T-cell (primary cell): ENCODE measurements at regions of chr22 and their contacts with region 1.

Region 1: DNA sequence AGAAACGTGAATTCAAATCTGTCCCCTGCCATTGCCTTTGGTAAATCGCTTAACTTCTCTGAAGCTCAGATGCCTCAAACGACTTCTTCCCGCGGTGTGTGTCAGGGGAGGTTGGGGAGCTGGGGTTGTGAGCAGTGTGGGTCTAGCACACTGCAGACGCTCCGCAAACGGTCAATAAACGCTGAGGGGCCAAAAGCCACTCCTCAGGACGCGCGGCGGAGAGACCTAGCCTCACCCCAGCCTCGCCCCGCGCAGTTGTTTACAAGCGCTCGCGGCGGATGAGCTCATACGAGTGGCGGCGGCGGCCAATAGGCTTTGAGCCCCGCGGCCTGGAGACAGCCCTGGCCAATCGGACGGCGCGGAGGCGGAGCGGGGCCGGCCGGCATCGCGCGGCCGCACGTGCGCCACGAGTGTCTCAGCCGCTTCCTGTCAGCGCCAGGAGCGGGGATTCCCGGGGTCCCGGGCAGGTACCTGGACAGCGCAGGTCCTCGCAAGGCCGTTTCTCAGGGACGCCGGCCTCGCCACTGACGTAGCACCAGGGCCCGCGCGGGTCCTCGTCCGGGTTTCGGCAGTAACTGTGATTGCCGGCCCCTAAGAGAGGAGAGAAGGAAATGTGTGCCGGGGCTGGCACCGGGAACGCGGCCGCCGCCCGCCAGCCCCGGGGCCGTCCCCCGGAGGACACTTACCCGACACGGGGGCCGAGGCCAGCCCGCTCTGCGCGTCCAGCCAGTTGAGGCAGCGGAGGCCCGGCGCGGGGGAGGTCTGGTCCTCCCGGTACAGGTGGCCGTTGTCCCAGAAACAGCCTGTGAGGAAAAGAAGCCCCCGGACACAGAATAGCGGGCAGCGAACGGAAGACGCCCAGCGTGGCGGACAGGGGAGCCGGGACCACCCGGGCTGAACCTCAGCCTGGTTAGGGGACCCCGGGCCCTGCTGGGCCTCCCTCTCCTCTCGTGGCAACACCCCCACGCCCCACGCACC is 1.5 kb downstream of the PIK3IP1 start:
- DNase-seq: peak; percentile 90 to 98 (median 96)
- ATAC-seq: peak; percentile 74 to 79 (median 76)
- H3K4me3 ChIP-seq: peak overlapping the region; percentile 58 to 69
- H3K4me3 Mint-ChIP-seq: peak overlapping the region; percentile 93 to 98 (median 97)
- H3K27ac ChIP-seq: peak overlapping the region; percentile 98
- H3K27ac Mint-ChIP-seq: peak overlapping the region; percentile 99 to 100
- H3K4me1 ChIP-seq: peaks cover 46 to 66% of the 10 kb centered on the region in 2 experiments
- H3K4me1 Mint-ChIP-seq: peaks cover 63 to 79% (median 71%) of the 10 kb centered on the region in 3 donors
- H3K27me3 ChIP-seq: no peaks in the 10 kb centered on the region
- H3K27me3 Mint-ChIP-seq: no peaks in the 10 kb centered on the region

Region 2: DNA sequence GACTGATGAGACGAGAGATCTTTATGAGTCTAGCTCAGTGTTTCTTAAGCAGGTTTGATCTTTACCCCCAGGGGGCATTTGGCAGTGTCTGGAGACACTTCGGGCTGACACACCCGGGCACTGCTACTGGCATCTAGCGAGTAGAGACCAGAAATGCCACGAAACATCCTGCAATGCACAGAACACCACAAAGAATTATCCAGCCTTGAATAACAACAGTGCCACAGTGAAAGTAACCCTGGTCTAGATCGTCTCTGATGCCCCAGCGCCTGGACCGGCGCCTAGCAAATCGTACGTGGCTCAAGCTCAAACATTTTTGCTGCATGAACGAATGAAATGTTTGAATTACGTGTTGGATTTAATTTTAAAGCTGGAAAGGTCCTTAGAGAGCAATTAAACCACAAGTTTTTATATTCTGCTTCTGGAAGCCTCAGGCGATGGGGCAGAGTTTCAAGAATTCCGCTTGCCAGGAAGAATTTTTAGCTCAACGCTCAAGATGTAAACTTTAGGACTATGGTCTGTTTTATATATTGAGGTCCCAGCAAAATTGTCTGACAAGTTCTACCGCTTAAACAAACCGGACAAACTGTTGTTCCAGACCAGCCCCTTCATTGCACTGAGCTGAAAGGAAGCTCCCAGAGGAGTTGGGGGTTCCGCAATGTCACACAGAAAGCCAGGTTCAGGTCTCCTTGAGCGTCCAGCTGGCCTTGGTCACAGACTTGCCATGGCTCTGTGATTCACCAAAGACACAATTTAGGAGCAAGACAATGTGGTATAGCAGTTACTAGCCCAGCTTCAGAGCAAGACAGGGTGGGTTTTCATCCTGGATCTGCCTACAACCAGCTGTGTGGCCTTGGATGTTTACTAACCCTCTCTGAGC is 253.9 kb before region 1 on chr22:
- CTCF ChIA-PET with region 1: no interaction called
- POLR2A ChIA-PET with region 1: no interaction called
- DNase-seq: peak in 3 of 35 experiments; percentile 0 to 8 (median 5)
- ATAC-seq: no peak
- H3K4me3 ChIP-seq: no peak overlapping the region
- H3K4me3 Mint-ChIP-seq: no peak overlapping the region
- H3K27ac ChIP-seq: no peak overlapping the region
- H3K27ac Mint-ChIP-seq: no peak overlapping the region
- H3K4me1 ChIP-seq: no peaks in the 10 kb centered on the region
- H3K4me1 Mint-ChIP-seq: no peaks in the 10 kb centered on the region
- H3K27me3 ChIP-seq: peaks cover 0 to 7% of the 10 kb centered on the region in 2 experiments
- H3K27me3 Mint-ChIP-seq: peaks cover 3 to 12% of the 10 kb centered on the region in 2 donors

Region 3: GRCh38 chr22:31278622-31279326 is 12.0 kb before region 1 on chr22:
- CTCF ChIA-PET with region 1: interaction called, 6 to 15 read pairs
- POLR2A ChIA-PET with region 1: interaction called, 26 to 65 read pairs
- DNase-seq: peak in 31 of 35 experiments; percentile 25 to 81 (median 54)
- ATAC-seq: peak; percentile 44 to 82 (median 80)
- H3K4me3 ChIP-seq: no peak overlapping the region
- H3K4me3 Mint-ChIP-seq: peak overlapping the region; percentile 54 to 67 (median 61)
- H3K27ac ChIP-seq: peak overlapping the region; percentile 83
- H3K27ac Mint-ChIP-seq: peak overlapping the region; percentile 99 to 100
- H3K4me1 ChIP-seq: peaks cover 59 to 86% of the 10 kb centered on the region in 2 experiments
- H3K4me1 Mint-ChIP-seq: peaks cover 81 to 94% (median 93%) of the 10 kb centered on the region in 3 donors
- H3K27me3 ChIP-seq: no peaks in the 10 kb centered on the region
- H3K27me3 Mint-ChIP-seq: no peaks in the 10 kb centered on the region

Region 4: DNA sequence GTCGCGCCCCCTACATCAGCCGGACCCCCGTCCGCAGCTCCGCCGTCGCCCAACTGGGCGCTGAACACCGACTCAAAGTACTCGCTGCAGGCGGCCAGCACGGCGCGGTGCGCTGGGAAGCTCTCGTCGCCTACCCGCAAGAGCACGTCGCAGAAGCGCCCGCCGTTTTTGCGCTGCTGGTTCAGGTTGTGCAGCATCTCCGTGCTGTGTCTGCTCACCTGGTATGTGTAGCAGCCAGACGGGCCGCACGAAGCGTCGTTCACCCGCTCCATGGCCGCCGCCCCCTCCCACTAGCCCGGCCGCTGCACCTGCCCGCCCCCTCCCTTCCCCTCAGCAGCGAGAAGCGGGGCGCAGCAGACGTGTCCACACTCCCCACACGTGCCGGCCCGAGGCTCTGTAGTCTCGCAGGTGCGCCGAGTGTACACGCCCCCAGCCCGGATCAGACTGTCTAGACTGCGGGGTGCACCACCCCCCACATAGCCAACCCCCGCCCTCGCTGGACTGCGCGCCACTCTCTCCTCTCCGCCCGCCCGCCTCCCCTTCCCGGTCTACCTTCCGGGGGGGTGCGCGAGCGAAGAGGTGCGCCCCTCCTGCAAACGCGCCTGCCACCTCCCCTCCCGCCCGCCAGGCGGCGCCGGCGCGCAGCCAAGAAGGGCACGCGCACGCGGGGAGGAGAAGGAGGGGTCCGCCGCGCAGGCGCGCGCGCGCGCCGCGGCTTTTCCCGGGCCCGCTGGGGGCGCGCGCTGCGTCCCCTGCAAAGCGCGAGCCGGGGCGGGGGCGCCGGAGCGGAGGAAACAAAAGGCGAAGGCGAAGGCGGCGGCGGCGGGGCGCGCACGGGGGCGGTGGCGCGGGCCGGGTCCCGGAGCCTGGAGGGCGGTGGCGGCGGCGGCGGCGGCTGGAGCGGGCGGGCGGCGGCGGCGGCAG is 54.8 kb after region 1 on chr22:
- CTCF ChIA-PET with region 1: interaction called in 1 of 2 experiments, 7 read pairs
- POLR2A ChIA-PET with region 1: interaction called in 1 of 2 experiments, 15 read pairs
- DNase-seq: peak; percentile 78 to 96 (median 87)
- ATAC-seq: peak; percentile 63 to 77 (median 66)
- H3K4me3 ChIP-seq: peak overlapping the region; percentile 61 to 76
- H3K4me3 Mint-ChIP-seq: peak overlapping the region; percentile 81 to 87 (median 85)
- H3K27ac ChIP-seq: peak overlapping the region; percentile 36
- H3K27ac Mint-ChIP-seq: peak overlapping the region; percentile 88 to 91
- H3K4me1 ChIP-seq: peaks cover 25 to 63% of the 10 kb centered on the region in 2 experiments
- H3K4me1 Mint-ChIP-seq: peaks cover 48 to 53% (median 48%) of the 10 kb centered on the region in 3 donors
- H3K27me3 ChIP-seq: no peaks in the 10 kb centered on the region
- H3K27me3 Mint-ChIP-seq: no peaks in the 10 kb centered on the region